ENCODE measurements at regions of chr5 and their contacts with region 1.

Region 1: GRCh38 chr5:91499943-91500531 is 116.9 kb upstream of the ARRDC3 start:
- DNase-seq: peak in 4 of 5 donors; percentile 30 to 45 (median 36)
- H3K4me3 ChIP-seq: no peak overlapping the region
- H3K4me3 Mint-ChIP-seq: no peak overlapping the region
- H3K27ac ChIP-seq: no peak overlapping the region
- H3K27ac Mint-ChIP-seq: no peak overlapping the region
- H3K4me1 ChIP-seq: no peaks in the 10 kb centered on the region
- H3K4me1 Mint-ChIP-seq: no peaks in the 10 kb centered on the region
- H3K27me3 ChIP-seq: no peaks in the 10 kb centered on the region
- H3K27me3 Mint-ChIP-seq: peaks cover 0 to 1% of the 10 kb centered on the region in 2 donors

Region 2: DNA sequence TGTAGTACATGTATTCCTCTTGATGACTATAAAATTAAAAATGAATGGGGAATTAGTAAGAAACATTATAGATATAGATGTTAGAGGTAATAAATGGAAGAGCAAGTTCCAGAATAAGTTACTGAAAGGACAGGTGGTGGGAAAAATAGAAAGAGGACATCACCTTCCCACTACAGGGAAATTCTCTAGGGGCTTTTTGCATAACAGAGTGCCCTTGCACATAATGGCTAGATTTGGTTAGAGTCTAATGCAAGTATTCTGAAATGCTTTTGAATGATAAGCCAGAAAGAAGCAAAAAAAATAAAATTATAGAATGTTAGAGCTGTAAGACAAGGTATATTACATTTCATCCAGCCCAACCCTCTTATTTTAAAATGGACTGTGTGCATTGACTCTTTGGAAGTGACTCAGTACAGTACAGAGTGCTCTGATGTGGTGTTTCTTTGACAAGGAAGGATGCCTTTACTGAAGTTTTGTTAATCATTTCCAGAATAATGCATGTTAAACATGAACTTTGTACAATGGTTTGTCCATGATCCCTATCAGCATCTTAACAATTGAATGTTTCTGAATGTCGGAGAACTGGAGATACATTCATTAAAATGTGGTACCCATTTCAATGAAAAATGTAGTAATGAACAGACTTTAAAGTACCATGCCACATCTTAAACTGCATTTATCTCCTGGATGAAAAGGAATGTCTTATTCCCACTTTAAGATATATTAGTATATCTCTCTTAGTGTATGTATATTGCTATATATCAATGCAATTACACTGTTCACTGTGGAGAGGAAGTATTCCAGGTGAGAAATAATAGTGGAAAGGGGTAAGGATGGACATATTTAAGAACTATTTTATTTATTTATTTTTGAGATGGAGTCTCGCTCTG is 550.3 kb before region 1 on chr5:
- CTCF ChIA-PET with region 1: no interaction called
- POLR2A ChIA-PET with region 1: no interaction called
- intact Hi-C with region 1: no loop called
- DNase-seq: no peak
- H3K4me3 ChIP-seq: no peak overlapping the region
- H3K4me3 Mint-ChIP-seq: no peak overlapping the region
- H3K27ac ChIP-seq: no peak overlapping the region
- H3K27ac Mint-ChIP-seq: no peak overlapping the region
- H3K4me1 ChIP-seq: no peaks in the 10 kb centered on the region
- H3K4me1 Mint-ChIP-seq: no peaks in the 10 kb centered on the region
- H3K27me3 ChIP-seq: no peaks in the 10 kb centered on the region
- H3K27me3 Mint-ChIP-seq: peaks cover 4 to 6% of the 10 kb centered on the region in 2 donors

Region 3: GRCh38 chr5:91514400-91514799 is 14.4 kb after region 1 on chr5:
- CTCF ChIA-PET with region 1: interaction called, 24 read pairs
- POLR2A ChIA-PET with region 1: no interaction called
- intact Hi-C with region 1: no loop called
- DNase-seq: no peak
- H3K4me3 ChIP-seq: no peak overlapping the region
- H3K4me3 Mint-ChIP-seq: no peak overlapping the region
- H3K27ac ChIP-seq: no peak overlapping the region
- H3K27ac Mint-ChIP-seq: peak overlapping the region in 1 of 7 donors; percentile 17
- H3K4me1 ChIP-seq: no peaks in the 10 kb centered on the region
- H3K4me1 Mint-ChIP-seq: peaks cover 0 to 5% (median 2%) of the 10 kb centered on the region in 4 donors
- H3K27me3 ChIP-seq: no peaks in the 10 kb centered on the region
- H3K27me3 Mint-ChIP-seq: peaks cover 0 to 8% of the 10 kb centered on the region in 2 donors